A549 (cell line): ENCODE measurements at regions of chr11 and their contacts with region 1.

Region 1: DNA sequence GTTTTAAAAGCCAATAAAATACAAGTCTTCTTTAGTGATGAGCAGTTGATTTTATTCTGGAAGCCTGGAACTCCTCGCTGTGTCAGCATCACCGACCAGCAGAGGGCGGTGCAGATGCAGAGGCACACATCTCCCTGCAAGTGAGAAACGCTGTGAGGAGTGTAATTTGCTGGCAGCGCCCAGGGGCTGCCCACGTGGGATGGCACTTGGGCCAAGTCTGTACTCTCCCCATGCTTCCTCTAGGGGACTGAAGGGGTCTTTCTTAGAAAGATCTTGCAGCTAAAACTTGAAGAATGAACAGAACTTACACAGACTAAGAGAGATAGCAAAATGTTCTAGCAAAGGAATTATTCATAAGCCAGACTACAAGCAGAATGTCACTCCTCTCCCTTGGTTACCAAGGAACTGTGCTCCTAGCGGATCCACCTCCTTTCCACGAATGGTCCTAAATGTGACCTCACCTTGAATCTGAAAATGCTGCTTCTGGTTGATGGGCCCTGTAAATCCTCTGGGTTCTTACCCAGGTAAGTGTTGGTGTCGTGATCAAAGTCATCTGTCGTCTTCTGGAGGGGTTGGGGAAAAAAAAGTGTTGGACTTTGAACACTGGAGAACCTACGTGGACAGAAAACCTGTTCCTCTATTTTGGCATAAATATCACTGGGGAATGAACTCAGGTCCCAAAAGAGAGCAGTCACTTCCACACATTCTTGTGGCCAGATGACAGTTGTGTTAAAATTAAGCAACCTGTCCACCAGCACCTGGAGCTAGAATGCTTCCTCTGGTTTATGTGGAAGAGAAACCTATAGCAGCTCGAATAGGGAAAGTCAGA is 31.8 kb downstream of the CNTF start:
- DNase-seq: peak; percentile 67 to 77
- ATAC-seq: peak; percentile 98 to 100
- H3K4me3 ChIP-seq: no peak overlapping the region
- H3K27ac ChIP-seq: no peak overlapping the region
- H3K4me1 ChIP-seq: peaks cover 4% of the 10 kb centered on the region; the same call in 1 of the 3 replicates
- CTCF ChIP-seq: peak; percentile 87
- EP300 ChIP-seq: no peak
- POLR2A ChIP-seq: no peak
- RAD21 ChIP-seq: peak; percentile 71 to 72

Region 2: GRCh38 chr11:58485961-58486360 is 168.3 kb before region 1 on chr11:
- CTCF ChIA-PET with region 1: no interaction called
- POLR2A ChIA-PET with region 1: no interaction called
- DNase-seq: no peak
- ATAC-seq: no peak
- H3K4me3 ChIP-seq: no peak overlapping the region
- H3K27ac ChIP-seq: no peak overlapping the region
- H3K4me1 ChIP-seq: no peaks in the 10 kb centered on the region
- CTCF ChIP-seq: no peak
- EP300 ChIP-seq: no peak
- POLR2A ChIP-seq: no peak
- RAD21 ChIP-seq: no peak

Region 3: GRCh38 chr11:58524232-58525036 is 129.9 kb before region 1 on chr11:
- CTCF ChIA-PET with region 1: no interaction called
- POLR2A ChIA-PET with region 1: no interaction called
- DNase-seq: peak; percentile 71 to 85
- ATAC-seq: peak; percentile 98 to 99
- H3K4me3 ChIP-seq: peak overlapping the region; percentile 19; the same call in 1 of the 3 replicates
- H3K27ac ChIP-seq: peak overlapping the region in 1 of 2 experiments; percentile 30; a peak in 1 of 6 replicates
- H3K4me1 ChIP-seq: 0 out of 3 replicates have a peak, but pooled peaks cover 3% of the 10 kb centered on the region
- CTCF ChIP-seq: peak; percentile 77
- EP300 ChIP-seq: no peak
- POLR2A ChIP-seq: no peak
- RAD21 ChIP-seq: peak; percentile 64 to 70

Region 4: DNA sequence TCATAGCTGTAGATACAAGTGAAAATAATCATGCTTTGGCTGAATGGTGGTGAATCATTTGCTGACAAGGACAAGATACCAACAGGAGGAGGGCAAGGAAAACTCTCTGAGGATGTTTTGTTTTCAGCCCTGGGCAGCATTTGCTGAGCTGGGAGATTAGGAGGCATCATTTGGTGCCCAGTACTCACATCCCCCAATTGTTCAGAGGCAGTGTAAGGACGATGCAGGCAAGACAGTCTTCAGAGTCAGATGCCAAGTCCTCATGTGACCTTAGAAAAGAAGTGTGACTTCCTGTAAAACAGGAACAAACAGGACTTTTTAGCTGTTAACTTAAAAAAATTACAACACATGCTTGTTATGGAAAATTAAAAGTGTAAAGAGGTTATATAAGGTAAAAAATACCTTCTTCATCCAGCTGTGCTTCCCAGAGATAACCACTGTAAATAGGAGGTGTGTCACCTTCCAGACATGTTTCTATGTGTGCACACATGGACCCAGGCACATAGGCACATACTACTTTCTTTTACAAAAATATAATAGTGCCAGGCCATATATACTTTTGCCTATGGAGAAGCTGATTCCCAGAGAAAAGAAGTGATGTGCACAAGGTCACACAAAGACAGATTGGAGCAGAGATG is 13.8 kb before region 1 on chr11:
- CTCF ChIA-PET with region 1: interaction called, 36 read pairs
- POLR2A ChIA-PET with region 1: no interaction called
- DNase-seq: no peak
- ATAC-seq: no peak
- H3K4me3 ChIP-seq: no peak overlapping the region
- H3K27ac ChIP-seq: no peak overlapping the region
- H3K4me1 ChIP-seq: no peaks in the 10 kb centered on the region
- CTCF ChIP-seq: no peak
- EP300 ChIP-seq: no peak
- POLR2A ChIP-seq: no peak
- RAD21 ChIP-seq: no peak

Region 5: GRCh38 chr11:58671983-58672633 is 17.8 kb after region 1 on chr11:
- CTCF ChIA-PET with region 1: interaction called, 17 read pairs
- POLR2A ChIA-PET with region 1: no interaction called
- DNase-seq: no peak
- ATAC-seq: no peak
- H3K4me3 ChIP-seq: no peak overlapping the region
- H3K27ac ChIP-seq: no peak overlapping the region
- H3K4me1 ChIP-seq: 0 out of 3 replicates have a peak, but pooled peaks cover 3% of the 10 kb centered on the region
- CTCF ChIP-seq: no peak
- EP300 ChIP-seq: no peak
- POLR2A ChIP-seq: no peak
- RAD21 ChIP-seq: no peak

Region 6: GRCh38 chr11:58866788-58867187 is 212.5 kb after region 1 on chr11:
- CTCF ChIA-PET with region 1: no interaction called
- POLR2A ChIA-PET with region 1: no interaction called
- DNase-seq: no peak
- ATAC-seq: no peak
- H3K4me3 ChIP-seq: no peak overlapping the region
- H3K27ac ChIP-seq: no peak overlapping the region
- H3K4me1 ChIP-seq: no peaks in the 10 kb centered on the region
- CTCF ChIP-seq: no peak
- EP300 ChIP-seq: no peak
- POLR2A ChIP-seq: no peak
- RAD21 ChIP-seq: no peak

Region 7: DNA sequence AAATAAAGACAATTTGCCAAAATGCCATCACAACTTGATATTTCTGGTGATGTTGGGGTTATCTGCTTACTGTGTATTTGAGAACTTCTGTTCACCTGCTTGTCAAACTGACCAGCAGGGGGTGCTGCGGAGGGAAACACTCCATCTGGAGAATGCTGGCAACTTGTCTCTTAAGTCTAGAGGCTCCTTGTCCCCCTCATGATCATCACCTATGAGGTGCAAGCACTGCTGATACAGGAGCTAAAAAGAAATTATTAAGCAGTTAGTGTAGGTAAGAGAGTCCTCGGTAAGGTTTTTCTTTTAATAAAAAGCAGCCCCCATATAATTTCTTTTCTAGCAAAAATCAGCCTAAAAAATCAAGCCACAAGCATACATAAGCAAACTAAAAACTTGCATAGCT is 399.1 kb after region 1 on chr11:
- CTCF ChIA-PET with region 1: interaction called, 14 read pairs
- POLR2A ChIA-PET with region 1: no interaction called
- DNase-seq: peak in 1 of 2 experiments; percentile 67
- ATAC-seq: peak; percentile 58 to 80; a peak in 4 of 6 replicates
- H3K4me3 ChIP-seq: no peak overlapping the region
- H3K27ac ChIP-seq: no peak overlapping the region
- H3K4me1 ChIP-seq: 0 out of 3 replicates have a peak, but pooled peaks cover 2% of the 10 kb centered on the region
- CTCF ChIP-seq: peak; percentile 51
- EP300 ChIP-seq: no peak
- POLR2A ChIP-seq: no peak
- RAD21 ChIP-seq: peak in 1 of 2 experiments; percentile 9; a peak in 1 of 5 replicates